ENCODE measurements at regions of chr14 and their contacts with region 1.

Region 1: DNA sequence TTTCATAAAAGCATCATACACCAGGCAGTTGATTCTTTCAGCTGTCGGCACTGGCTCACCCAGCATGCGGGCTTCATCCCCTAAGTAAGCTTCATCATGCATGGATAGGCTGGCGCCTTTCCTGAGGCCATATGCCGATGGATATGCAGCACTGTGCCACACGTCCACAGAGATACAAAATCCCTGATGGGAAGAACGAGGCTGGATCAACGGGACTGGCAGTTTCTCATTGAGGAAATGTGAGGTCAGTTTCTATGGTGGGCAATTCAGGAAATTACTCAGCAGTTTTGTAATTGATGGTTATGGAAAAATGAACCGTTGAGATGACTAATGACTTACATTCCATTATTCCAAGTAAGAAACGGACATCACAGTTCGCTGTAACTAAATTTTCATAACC is 453.8 kb downstream of the TMEM121 start:
- DNase-seq: no peak
- ATAC-seq: no peak
- H3K4me3 Mint-ChIP-seq: no peak overlapping the region
- H3K27ac Mint-ChIP-seq: no peak overlapping the region
- H3K4me1 Mint-ChIP-seq: peaks cover 25 to 47% (median 43%) of the 10 kb centered on the region in 4 donors
- H3K27me3 Mint-ChIP-seq: peaks cover 0 to 11% (median 0%) of the 10 kb centered on the region in 5 donors

Region 2: GRCh38 chr14:105999361-106000028 is 19.3 kb after region 1 on chr14:
- POLR2A ChIA-PET with region 1: interaction called, 16 read pairs
- DNase-seq: peak; percentile 45 to 87 (median 66)
- ATAC-seq: peak; percentile 73 to 80
- H3K4me3 Mint-ChIP-seq: peak overlapping the region in 4 of 10 donors; percentile 15 to 76 (median 24)
- H3K27ac Mint-ChIP-seq: peak overlapping the region in 4 of 10 donors; percentile 20 to 84 (median 79)
- H3K4me1 Mint-ChIP-seq: peaks cover 12 to 49% (median 29%) of the 10 kb centered on the region in 4 donors
- H3K27me3 Mint-ChIP-seq: no peaks in the 10 kb centered on the region

Region 3: GRCh38 chr14:106163306-106163705 is 183.1 kb after region 1 on chr14:
- POLR2A ChIA-PET with region 1: no interaction called
- DNase-seq: no peak
- ATAC-seq: no peak
- H3K4me3 Mint-ChIP-seq: peak overlapping the region in 1 of 10 donors; percentile 14
- H3K27ac Mint-ChIP-seq: peak overlapping the region in 4 of 10 donors; percentile 41 to 69 (median 64)
- H3K4me1 Mint-ChIP-seq: peaks cover 7 to 16% (median 12%) of the 10 kb centered on the region in 4 donors
- H3K27me3 Mint-ChIP-seq: peaks cover 0 to 41% (median 12%) of the 10 kb centered on the region in 5 donors